Right ventricle myocardium inferior (tissue), 1 donor: ENCODE measurements at regions of chr16 and their contacts with region 1.

Region 1: DNA sequence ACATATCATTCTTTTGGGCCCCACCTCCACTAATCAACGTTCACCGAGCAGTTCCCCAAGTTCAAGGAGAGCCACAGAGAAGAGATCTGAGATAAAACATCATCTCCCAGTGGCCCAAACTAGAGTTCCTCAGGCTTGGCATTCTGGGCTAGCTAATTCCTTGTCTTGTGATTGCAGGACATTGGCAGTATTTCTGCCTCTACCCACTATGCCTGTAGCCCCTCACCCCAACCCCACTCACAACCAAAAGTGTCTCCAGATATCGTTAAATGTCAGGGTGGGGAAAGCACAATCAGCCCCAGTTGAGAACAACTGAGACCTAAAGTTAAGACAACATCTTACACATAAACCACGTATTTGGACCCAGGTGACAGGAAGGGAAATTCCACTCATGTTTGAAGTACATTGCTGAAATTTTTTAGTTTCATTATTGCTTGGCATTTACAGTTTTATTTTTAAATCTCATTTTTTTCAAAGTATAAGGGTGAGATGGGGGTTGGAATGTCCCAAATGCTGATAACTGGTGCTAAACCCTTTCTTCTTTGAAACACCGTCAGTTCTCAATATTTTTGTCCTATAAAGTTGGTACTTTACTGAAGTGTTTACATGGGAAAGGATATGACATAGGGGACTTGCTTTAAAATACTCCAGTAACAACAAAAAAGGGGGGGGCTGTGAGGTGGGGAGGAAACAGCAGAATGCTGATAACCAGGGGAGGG is 13.6 kb downstream of the ZC3H7A start:
- DNase-seq: no peak
- ATAC-seq: peak; percentile 51

Region 2: GRCh38 chr16:11742539-11743307 is 40.8 kb before region 1 on chr16 and contains the start of gene TXNDC11:
- intact Hi-C with region 1: loop called (anchors 5 kb)
- DNase-seq: peak; percentile 100
- ATAC-seq: peak; percentile 99
- total RNA-seq, gene TXNDC11: 20.3 TPM

Region 3: DNA sequence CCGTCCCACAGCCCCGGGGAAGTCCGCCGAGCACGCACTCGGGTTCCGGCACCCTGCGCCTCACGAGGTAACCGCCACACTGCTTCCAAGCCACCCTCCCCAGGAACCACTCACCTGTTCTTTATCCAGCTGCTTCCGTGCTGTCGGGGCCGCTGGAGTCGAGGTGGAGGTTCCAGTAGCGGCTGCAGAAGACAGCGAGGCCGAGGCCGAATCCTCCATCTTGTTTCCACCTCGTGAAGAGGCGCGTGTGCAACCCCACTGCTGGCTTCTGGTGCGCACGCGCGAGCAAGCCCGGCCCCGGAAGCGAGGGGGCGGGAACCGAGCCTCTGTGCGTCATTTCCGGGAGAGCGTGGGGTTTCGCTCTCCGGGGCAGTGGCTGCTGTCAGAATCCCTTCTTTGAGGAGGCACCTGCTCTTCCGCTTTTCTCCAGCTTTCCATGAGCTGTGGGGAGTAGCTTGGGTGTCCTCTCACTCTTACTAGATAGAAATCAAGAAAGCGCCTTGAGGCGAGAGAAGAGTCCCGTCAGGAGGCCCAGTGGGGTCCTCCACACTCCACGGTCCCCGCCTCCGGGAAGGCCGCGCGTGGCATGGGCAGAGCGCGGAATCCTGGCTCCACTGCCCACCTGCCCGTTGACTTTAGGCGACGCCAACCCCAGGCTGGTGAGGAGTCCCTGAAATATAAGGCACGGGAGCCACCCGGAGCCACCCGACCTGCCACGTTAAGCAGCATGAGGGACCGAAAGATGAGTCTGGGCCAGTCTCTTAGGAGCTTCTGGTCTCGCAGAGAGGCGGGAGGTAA is 68.0 kb after region 1 on chr16 and contains the start of gene RSL1D1:
- intact Hi-C with region 1: no loop called
- DNase-seq: peak; percentile 92
- ATAC-seq: peak; percentile 98
- total RNA-seq, gene RSL1D1: 111 TPM